B cell (primary cell): ENCODE measurements at regions of chr1 and their contacts with region 1.

Region 1: GRCh38 chr1:112501810-112502641 is 6.7 kb upstream of the WNT2B start:
- DNase-seq: peak; percentile 72
- ATAC-seq: peak; percentile 76
- H3K4me3 ChIP-seq: peak overlapping the region in 4 of 5 experiments; percentile 22 to 61 (median 54)
- H3K4me3 Mint-ChIP-seq: peak overlapping the region; percentile 86
- H3K27ac ChIP-seq: no peak overlapping the region
- H3K27ac Mint-ChIP-seq: no peak overlapping the region
- H3K4me1 ChIP-seq: peaks cover 35 to 43% of the 10 kb centered on the region in 2 donors
- H3K4me1 Mint-ChIP-seq: peaks cover 43% of the 10 kb centered on the region
- H3K27me3 ChIP-seq: peaks cover 0 to 69% (median 31%) of the 10 kb centered on the region in 4 experiments
- H3K27me3 Mint-ChIP-seq: peaks cover 68% of the 10 kb centered on the region
- CTCF ChIP-seq: peak; percentile 63

Region 2: DNA sequence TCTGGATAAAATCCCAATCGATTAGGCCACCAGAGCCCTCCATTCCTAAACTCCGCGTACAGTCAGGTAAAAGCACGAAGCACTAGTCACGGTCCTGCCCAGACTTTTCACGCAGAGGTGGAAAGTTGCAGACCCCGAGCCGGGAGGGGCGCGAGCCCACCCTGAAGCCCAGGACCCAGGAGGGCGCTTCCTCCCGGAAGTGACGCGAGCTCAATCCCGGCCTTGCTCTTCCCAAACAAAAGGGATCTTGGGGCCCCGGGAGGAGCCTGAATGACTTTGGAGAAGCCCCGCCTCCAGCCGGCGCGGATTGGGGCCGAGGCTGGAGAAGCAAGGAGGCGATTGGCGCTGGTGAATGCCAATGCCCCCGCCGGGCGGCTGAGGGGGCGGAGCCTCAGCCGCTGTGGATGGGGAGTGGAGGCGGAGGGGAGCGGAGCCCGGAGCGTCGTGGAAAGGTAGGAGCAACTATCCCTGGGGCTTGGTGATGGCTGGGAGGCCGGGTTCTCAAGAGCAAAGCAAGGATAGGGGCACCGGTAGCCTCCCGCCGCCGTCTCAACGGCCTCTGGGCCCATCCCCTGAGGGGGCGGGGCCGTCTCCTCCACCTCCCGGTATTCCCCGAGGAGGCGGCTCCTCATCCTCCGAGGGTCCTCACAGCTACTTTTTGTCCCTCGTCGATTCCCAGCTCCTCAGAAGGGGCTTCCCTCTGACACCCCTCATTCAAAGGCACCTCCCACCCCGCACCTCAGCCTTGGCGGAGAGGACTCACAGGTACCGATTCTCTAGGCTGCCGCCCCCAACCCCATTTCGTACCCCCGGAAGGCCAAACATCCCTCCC is 106.0 kb before region 1 on chr1 and contains the start of gene CTTNBP2NL:
- CTCF ChIA-PET with region 1: interaction called, 31 read pairs
- POLR2A ChIA-PET with region 1: interaction called, 4 read pairs
- intact Hi-C with region 1: loop called (anchors 2 kb)
- DNase-seq: peak; percentile 86
- ATAC-seq: peak; percentile 96
- H3K4me3 ChIP-seq: peak within 1 kb of the TSS; percentile 24 to 98 (median 91)
- H3K4me3 Mint-ChIP-seq: peak within 1 kb of the TSS; percentile 98
- H3K27ac ChIP-seq: peak within 1 kb of the TSS in 1 of 2 donors; percentile 50
- H3K27ac Mint-ChIP-seq: peak within 1 kb of the TSS; percentile 75
- H3K4me1 ChIP-seq: peaks cover 21 to 33% of the 10 kb centered on the region in 2 donors
- H3K4me1 Mint-ChIP-seq: peaks cover 45% of the 10 kb centered on the region
- H3K27me3 ChIP-seq: peaks cover 0 to 5% (median 0%) of the 10 kb centered on the region in 4 experiments
- H3K27me3 Mint-ChIP-seq: no peaks in the 10 kb centered on the region
- CTCF ChIP-seq: no peak
- total RNA-seq, gene CTTNBP2NL: 28.3 and 28.9 TPM in 2 replicates

Region 3: GRCh38 chr1:112466078-112466660 is 35.9 kb before region 1 on chr1:
- CTCF ChIA-PET with region 1: interaction called, 21 read pairs
- POLR2A ChIA-PET with region 1: no interaction called
- intact Hi-C with region 1: loop called (anchors 2 kb)
- DNase-seq: peak; percentile 94
- ATAC-seq: peak; percentile 97
- H3K4me3 ChIP-seq: peak overlapping the region; percentile 5 to 51 (median 50)
- H3K4me3 Mint-ChIP-seq: peak overlapping the region; percentile 83
- H3K27ac ChIP-seq: peak overlapping the region; percentile 74 to 75
- H3K27ac Mint-ChIP-seq: peak overlapping the region; percentile 83
- H3K4me1 ChIP-seq: peaks cover 27 to 40% of the 10 kb centered on the region in 2 donors
- H3K4me1 Mint-ChIP-seq: peaks cover 46% of the 10 kb centered on the region
- H3K27me3 ChIP-seq: peaks cover 0 to 21% (median 12%) of the 10 kb centered on the region in 4 experiments
- H3K27me3 Mint-ChIP-seq: peaks cover 19% of the 10 kb centered on the region
- CTCF ChIP-seq: peak; percentile 75

Region 4: GRCh38 chr1:112614460-112615065 is 112.5 kb after region 1 on chr1:
- CTCF ChIA-PET with region 1: interaction called, 10 read pairs
- POLR2A ChIA-PET with region 1: no interaction called
- intact Hi-C with region 1: no loop called
- DNase-seq: peak; percentile 46
- ATAC-seq: no peak
- H3K4me3 ChIP-seq: no peak overlapping the region
- H3K4me3 Mint-ChIP-seq: no peak overlapping the region
- H3K27ac ChIP-seq: no peak overlapping the region
- H3K27ac Mint-ChIP-seq: no peak overlapping the region
- H3K4me1 ChIP-seq: peaks cover 5 to 9% of the 10 kb centered on the region in 2 donors
- H3K4me1 Mint-ChIP-seq: peaks cover 12% of the 10 kb centered on the region
- H3K27me3 ChIP-seq: no peaks in the 10 kb centered on the region
- H3K27me3 Mint-ChIP-seq: no peaks in the 10 kb centered on the region
- CTCF ChIP-seq: peak; percentile 64

Region 5: DNA sequence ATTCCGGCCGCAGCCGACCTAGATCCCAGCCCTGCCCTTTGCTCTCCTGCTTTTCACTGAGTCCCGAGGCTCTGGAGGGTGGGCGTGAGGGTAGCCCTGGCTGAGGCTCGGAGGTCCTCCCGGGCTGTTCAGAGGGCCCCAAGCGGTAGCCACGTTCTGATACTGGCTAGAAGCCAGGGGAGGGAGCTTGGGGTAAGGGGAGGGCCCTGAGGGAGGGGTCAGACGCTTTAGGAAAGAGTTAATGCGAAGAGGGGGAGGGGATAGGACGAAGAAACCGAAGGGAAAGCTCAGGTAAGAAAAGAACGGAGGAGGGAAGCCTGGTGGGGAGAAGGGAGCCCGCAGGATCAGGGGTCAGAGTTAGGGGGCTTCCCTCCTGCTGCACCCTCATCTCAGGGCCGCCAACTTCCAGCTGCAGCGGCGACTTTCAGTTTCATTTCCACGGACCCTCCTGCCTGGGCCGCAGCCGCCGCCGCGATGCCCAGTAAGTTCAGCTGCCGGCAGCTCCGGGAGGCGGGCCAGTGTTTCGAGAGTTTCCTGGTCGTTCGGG is 172.5 kb after region 1 on chr1 and contains the start of gene MOV10:
- CTCF ChIA-PET with region 1: interaction called, 18 read pairs
- POLR2A ChIA-PET with region 1: no interaction called
- intact Hi-C with region 1: loop called (anchors 10 kb)
- DNase-seq: peak; percentile 76
- ATAC-seq: peak; percentile 63
- H3K4me3 ChIP-seq: peak within 1 kb of the TSS; percentile 42 to 86 (median 80)
- H3K4me3 Mint-ChIP-seq: peak within 1 kb of the TSS; percentile 94
- H3K27ac ChIP-seq: peak within 1 kb of the TSS; percentile 26 to 76
- H3K27ac Mint-ChIP-seq: peak within 1 kb of the TSS; percentile 92
- H3K4me1 ChIP-seq: peaks cover 25 to 30% of the 10 kb centered on the region in 2 donors
- H3K4me1 Mint-ChIP-seq: peaks cover 30% of the 10 kb centered on the region
- H3K27me3 ChIP-seq: no peaks in the 10 kb centered on the region
- H3K27me3 Mint-ChIP-seq: no peaks in the 10 kb centered on the region
- CTCF ChIP-seq: no peak
- total RNA-seq, gene MOV10: 46.2 and 51.2 TPM in 2 replicates

Region 6: GRCh38 chr1:112700290-112701226 is 198.5 kb after region 1 on chr1:
- CTCF ChIA-PET with region 1: interaction called, 11 read pairs
- POLR2A ChIA-PET with region 1: no interaction called
- intact Hi-C with region 1: no loop called
- DNase-seq: peak; percentile 77
- ATAC-seq: peak; percentile 79
- H3K4me3 ChIP-seq: peak overlapping the region in 1 of 5 experiments; percentile 28
- H3K4me3 Mint-ChIP-seq: peak overlapping the region; percentile 77
- H3K27ac ChIP-seq: peak overlapping the region; percentile 79 to 86
- H3K27ac Mint-ChIP-seq: peak overlapping the region; percentile 96
- H3K4me1 ChIP-seq: peaks cover 49 to 59% of the 10 kb centered on the region in 2 donors
- H3K4me1 Mint-ChIP-seq: peaks cover 63% of the 10 kb centered on the region
- H3K27me3 ChIP-seq: no peaks in the 10 kb centered on the region
- H3K27me3 Mint-ChIP-seq: no peaks in the 10 kb centered on the region
- CTCF ChIP-seq: no peak

Region 7: GRCh38 chr1:112706908-112707663 is 205.1 kb after region 1 on chr1 and contains the start of gene RHOC:
- CTCF ChIA-PET with region 1: interaction called, 33 read pairs
- POLR2A ChIA-PET with region 1: no interaction called
- intact Hi-C with region 1: loop called (anchors 1 kb)
- DNase-seq: peak; percentile 81
- ATAC-seq: peak; percentile 85
- H3K4me3 ChIP-seq: peak within 1 kb of the TSS in 4 of 5 experiments; percentile 56 to 74 (median 66)
- H3K4me3 Mint-ChIP-seq: peak within 1 kb of the TSS; percentile 88
- H3K27ac ChIP-seq: peak within 1 kb of the TSS in 1 of 2 donors; percentile 49
- H3K27ac Mint-ChIP-seq: peak within 1 kb of the TSS; percentile 81
- H3K4me1 ChIP-seq: peaks cover 34 to 46% of the 10 kb centered on the region in 2 donors
- H3K4me1 Mint-ChIP-seq: peaks cover 50% of the 10 kb centered on the region
- H3K27me3 ChIP-seq: no peaks in the 10 kb centered on the region
- H3K27me3 Mint-ChIP-seq: no peaks in the 10 kb centered on the region
- CTCF ChIP-seq: peak; percentile 72
- total RNA-seq, gene RHOC: 18.5 and 21.0 TPM in 2 replicates

Region 8: DNA sequence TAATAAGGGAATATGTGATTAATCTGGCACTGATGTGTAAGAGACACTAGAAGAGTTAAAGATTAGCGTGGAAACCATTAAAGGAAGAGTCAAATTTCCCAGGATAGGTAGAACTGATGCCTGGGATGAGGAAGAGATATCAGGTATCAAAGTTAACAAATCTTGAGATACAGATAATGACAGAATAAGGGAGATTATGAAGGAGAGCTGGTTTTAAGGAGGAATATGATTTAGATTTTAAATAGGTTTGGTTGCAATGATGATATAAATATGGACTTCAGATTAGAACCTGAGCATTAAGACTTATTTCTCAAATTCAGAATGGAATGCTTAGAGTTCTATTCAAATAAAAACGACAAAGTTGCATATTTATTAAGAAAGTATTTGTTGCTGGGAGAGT is 914.5 kb after region 1 on chr1:
- CTCF ChIA-PET with region 1: no interaction called
- POLR2A ChIA-PET with region 1: no interaction called
- intact Hi-C with region 1: no loop called
- DNase-seq: no peak
- ATAC-seq: no peak
- H3K4me3 ChIP-seq: no peak overlapping the region
- H3K4me3 Mint-ChIP-seq: no peak overlapping the region
- H3K27ac ChIP-seq: no peak overlapping the region
- H3K27ac Mint-ChIP-seq: no peak overlapping the region
- H3K4me1 ChIP-seq: no peaks in the 10 kb centered on the region
- H3K4me1 Mint-ChIP-seq: no peaks in the 10 kb centered on the region
- H3K27me3 ChIP-seq: peaks cover 0 to 4% (median 0%) of the 10 kb centered on the region in 4 experiments
- H3K27me3 Mint-ChIP-seq: peaks cover 3% of the 10 kb centered on the region
- CTCF ChIP-seq: no peak